Caco-2 (cell line): ENCODE measurements at regions of chr11 and their contacts with region 1.

Region 1: DNA sequence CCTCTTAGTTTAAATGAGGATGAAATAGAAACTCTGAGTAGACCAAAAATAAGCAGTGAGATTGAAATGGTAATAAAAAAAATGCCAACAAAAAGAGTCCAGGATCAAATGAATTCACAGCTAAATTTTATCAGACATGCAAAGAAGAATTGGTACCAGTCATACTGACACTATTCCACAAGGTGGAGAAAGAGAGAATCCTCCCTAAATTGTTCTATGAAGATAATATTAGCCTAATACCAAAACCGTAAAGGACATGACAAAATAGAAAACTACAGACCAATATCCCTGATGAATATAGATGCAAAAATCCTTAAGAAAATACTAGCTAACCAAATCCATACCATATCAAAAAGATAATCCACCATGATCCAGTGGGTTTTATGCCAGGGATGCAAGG is 169.8 kb upstream of the CHORDC1 start:
- DNase-seq: no peak
- H3K4me3 ChIP-seq: no peak overlapping the region
- H3K4me3 Mint-ChIP-seq: no peak overlapping the region
- H3K27ac Mint-ChIP-seq: no peak overlapping the region
- H3K4me1 ChIP-seq: no peaks in the 10 kb centered on the region
- H3K4me1 Mint-ChIP-seq: no peaks in the 10 kb centered on the region
- H3K27me3 ChIP-seq: no peaks in the 10 kb centered on the region
- H3K27me3 Mint-ChIP-seq: no peaks in the 10 kb centered on the region
- CTCF ChIP-seq: no peak

Region 2: GRCh38 chr11:90343673-90344072 is 49.0 kb before region 1 on chr11:
- CTCF ChIA-PET with region 1: no interaction called
- POLR2A ChIA-PET with region 1: no interaction called
- intact Hi-C with region 1: loop called (anchors 1 kb)
- DNase-seq: no peak
- H3K4me3 ChIP-seq: no peak overlapping the region
- H3K4me3 Mint-ChIP-seq: no peak overlapping the region
- H3K27ac Mint-ChIP-seq: no peak overlapping the region
- H3K4me1 ChIP-seq: peaks cover 5% of the 10 kb centered on the region; the same call in 1 of the 2 replicates
- H3K4me1 Mint-ChIP-seq: peaks cover 11% of the 10 kb centered on the region
- H3K27me3 ChIP-seq: no peaks in the 10 kb centered on the region
- H3K27me3 Mint-ChIP-seq: no peaks in the 10 kb centered on the region
- CTCF ChIP-seq: no peak